Activated B cell treated with CpG ODN at 0.5 μM for 24 hours (primary cell): ENCODE measurements at regions of chr1 and their contacts with region 1.

Region 1: GRCh38 chr1:16009030-16009709 is 5.1 kb downstream of the SRARP start:
- DNase-seq: peak; percentile 67
- ATAC-seq: peak; percentile 33
- H3K4me3 Mint-ChIP-seq: no peak overlapping the region
- H3K27ac Mint-ChIP-seq: no peak overlapping the region
- H3K4me1 Mint-ChIP-seq: peaks cover 42% of the 10 kb centered on the region
- H3K27me3 Mint-ChIP-seq: no peaks in the 10 kb centered on the region
- CTCF ChIP-seq: peak; percentile 84

Region 2: DNA sequence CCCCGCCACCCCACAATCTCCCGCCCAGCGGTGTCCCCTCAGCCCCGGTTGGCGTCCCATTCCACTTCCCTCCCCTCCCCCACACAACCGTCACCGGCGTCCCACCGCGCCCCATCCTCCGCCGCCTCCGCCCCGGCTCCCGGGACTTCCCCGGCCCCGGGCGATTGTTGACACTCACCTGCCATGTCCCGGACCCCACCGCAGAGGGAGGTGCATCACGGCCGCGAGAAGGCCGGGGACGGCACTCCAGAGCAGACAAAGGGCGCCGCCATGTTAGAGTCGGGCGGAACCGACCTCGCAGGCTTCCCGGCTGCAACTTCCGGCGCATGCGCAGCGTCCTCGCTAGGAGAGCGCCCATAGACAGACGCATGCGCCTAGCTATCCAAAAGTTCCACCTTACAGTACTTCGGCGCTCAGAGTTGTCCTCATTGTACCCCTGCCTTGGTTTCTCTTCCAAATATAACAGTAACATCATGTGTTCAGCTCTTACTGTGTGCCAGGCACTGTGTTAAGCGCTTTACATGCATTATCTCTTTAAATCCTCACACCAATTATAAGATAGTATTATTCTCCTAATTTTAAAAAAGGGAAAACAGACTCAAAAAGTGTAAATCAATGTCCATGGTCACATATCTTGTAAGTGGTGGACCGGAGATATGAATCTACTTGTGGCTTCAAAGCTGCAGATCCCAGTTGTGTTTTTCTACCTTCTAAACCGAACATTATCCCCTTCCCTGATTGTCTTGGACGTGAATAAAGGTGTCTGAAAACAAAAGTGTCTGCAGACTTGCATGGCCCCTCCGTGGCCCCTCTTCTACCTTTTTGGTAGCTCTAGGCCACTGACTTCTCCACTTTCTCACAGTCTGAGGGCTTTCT is 33.1 kb before region 1 on chr1 and contains the start of gene ZBTB17:
- CTCF ChIA-PET with region 1: interaction called, 3 read pairs
- POLR2A ChIA-PET with region 1: interaction called, 19 read pairs
- intact Hi-C with region 1: no loop called
- DNase-seq: peak; percentile 95
- ATAC-seq: peak; percentile 76
- H3K4me3 Mint-ChIP-seq: peak within 1 kb of the TSS; percentile 93
- H3K27ac Mint-ChIP-seq: peak within 1 kb of the TSS; percentile 96
- H3K4me1 Mint-ChIP-seq: peaks cover 43% of the 10 kb centered on the region
- H3K27me3 Mint-ChIP-seq: no peaks in the 10 kb centered on the region
- CTCF ChIP-seq: no peak
- total RNA-seq, gene ZBTB17: 109 and 121 TPM in 2 replicates

Region 3: DNA sequence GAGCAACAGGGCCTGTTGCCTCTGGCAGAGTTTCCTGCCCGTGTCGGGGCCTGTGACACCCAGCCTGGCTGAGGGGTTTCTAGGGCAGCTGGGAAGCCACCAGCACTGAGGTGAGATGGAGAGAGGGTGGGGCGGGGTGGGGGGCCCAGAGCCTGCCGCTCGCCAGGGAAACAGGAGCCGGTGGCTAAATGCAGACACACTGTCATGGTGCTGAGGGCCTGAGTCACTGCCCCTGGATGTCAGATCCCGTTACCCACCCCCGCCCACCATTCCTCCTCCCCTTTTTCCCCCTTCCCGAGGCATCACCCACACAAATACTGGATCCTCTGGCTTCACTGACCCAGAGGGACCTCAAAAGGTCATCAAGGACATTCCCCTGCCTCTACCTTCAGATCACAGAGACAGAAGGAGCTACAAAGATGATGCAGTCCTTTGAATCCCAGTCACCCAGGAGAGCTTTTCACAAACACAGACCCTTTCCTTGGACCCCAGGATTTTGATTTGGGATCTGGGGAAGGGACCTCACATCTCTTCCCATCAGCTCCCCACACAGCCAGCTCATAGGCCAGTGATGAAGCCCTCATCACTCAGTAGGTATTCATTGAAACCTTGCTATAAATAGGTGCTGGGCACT is 10.6 kb after region 1 on chr1:
- CTCF ChIA-PET with region 1: no interaction called
- POLR2A ChIA-PET with region 1: no interaction called
- intact Hi-C with region 1: no loop called
- DNase-seq: no peak
- ATAC-seq: no peak
- H3K4me3 Mint-ChIP-seq: no peak overlapping the region
- H3K27ac Mint-ChIP-seq: no peak overlapping the region
- H3K4me1 Mint-ChIP-seq: peaks cover 6% of the 10 kb centered on the region
- H3K27me3 Mint-ChIP-seq: peaks cover 3% of the 10 kb centered on the region
- CTCF ChIP-seq: no peak

Region 4: GRCh38 chr1:16032388-16033103 is 23.4 kb after region 1 on chr1:
- CTCF ChIA-PET with region 1: no interaction called
- POLR2A ChIA-PET with region 1: no interaction called
- intact Hi-C with region 1: loop called (anchors 1 kb)
- DNase-seq: peak; percentile 50
- ATAC-seq: peak; percentile 100
- H3K4me3 Mint-ChIP-seq: no peak overlapping the region
- H3K27ac Mint-ChIP-seq: no peak overlapping the region
- H3K4me1 Mint-ChIP-seq: peaks cover 2% of the 10 kb centered on the region
- H3K27me3 Mint-ChIP-seq: peaks cover 28% of the 10 kb centered on the region
- CTCF ChIP-seq: no peak

Region 5: GRCh38 chr1:16048573-16049189 is 39.5 kb after region 1 on chr1:
- CTCF ChIA-PET with region 1: no interaction called
- POLR2A ChIA-PET with region 1: no interaction called
- intact Hi-C with region 1: no loop called
- DNase-seq: peak; percentile 41
- ATAC-seq: peak; percentile 89
- H3K4me3 Mint-ChIP-seq: peak overlapping the region; percentile 53
- H3K27ac Mint-ChIP-seq: no peak overlapping the region
- H3K4me1 Mint-ChIP-seq: peaks cover 3% of the 10 kb centered on the region
- H3K27me3 Mint-ChIP-seq: peaks cover 20% of the 10 kb centered on the region
- CTCF ChIP-seq: no peak

Region 6: DNA sequence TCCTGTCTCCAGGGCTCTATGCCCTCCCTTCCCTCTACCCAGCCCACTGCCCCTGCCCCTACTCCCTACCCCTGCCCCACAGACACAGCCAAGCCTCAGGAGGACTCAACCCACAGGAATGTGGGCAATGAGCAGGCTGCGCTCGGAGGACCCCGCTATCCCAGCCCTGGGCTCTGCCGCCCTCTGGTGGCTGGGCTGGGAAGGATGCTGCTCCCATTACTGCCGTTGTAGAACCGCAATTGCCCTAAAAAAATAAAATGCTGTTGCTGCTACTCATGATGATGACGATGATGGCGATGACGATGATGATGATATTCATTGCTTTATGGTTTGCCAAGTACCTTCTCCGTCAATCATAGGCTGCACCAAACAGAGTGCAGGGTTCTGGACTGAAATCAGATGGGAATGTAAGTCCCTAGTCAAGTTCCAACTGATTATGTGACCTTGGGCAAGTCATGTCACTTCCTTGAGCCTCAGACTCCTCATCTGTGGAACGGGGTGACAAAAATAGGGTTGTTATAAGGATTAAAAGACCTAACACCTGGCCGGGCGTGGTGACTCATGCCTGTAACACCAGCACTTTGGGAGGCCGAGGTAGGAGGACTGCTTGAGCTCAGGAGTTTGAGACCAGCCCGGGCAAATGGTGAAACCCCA is 178.7 kb after region 1 on chr1:
- CTCF ChIA-PET with region 1: no interaction called
- POLR2A ChIA-PET with region 1: no interaction called
- intact Hi-C with region 1: loop called (anchors 1 kb)
- DNase-seq: peak; percentile 69
- ATAC-seq: peak; percentile 89
- H3K4me3 Mint-ChIP-seq: no peak overlapping the region
- H3K27ac Mint-ChIP-seq: no peak overlapping the region
- H3K4me1 Mint-ChIP-seq: no peaks in the 10 kb centered on the region
- H3K27me3 Mint-ChIP-seq: peaks cover 19% of the 10 kb centered on the region
- CTCF ChIP-seq: peak; percentile 44

Region 7: DNA sequence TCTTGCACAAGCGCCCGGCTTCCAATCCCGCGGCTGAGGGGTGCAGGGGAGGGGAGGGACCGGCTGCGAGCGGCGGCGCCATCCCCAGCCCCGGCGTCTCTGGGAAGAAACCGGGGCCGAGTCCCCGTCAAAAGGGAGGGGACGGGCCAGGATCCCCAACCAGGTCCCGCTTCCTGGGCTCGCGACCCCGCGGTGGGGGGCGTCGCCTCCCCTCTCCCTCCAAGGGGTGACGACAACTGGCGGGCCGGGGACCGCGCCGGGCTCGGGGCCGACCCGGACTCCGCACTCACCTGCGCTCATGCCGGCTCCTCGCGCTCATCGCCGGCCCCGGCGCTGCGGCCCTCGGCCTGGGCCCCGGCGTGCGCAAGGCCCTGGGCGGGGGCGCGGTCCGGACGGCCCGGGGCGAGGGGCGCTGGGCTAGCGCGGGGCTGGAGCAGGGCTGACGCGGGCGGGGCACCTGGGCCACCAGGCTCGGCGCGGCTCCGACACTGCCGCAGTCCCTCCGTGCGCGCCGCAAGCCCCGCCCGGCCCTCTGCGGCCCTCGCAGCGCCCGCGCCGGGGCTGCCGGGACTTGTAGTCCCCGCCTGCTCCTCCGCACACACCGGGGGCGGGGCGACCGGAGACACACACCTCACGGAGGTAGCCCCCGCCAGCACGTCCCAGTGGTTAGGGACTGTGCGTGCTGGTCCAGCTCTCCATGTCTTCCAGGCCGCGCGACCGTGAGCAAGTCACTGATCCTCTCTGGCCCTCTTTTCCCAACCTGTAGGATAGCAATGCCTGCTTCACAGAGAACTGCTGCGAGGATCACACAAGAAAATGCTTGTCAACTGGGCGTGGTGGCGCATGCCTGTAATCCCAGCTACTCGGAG is 1002.5 kb after region 1 on chr1 and contains the start of gene ATP13A2:
- CTCF ChIA-PET with region 1: no interaction called
- POLR2A ChIA-PET with region 1: no interaction called
- intact Hi-C with region 1: no loop called
- DNase-seq: peak; percentile 87
- ATAC-seq: peak; percentile 99
- H3K4me3 Mint-ChIP-seq: peak within 1 kb of the TSS; percentile 81
- H3K27ac Mint-ChIP-seq: peak within 1 kb of the TSS; percentile 20
- H3K4me1 Mint-ChIP-seq: peaks cover 24% of the 10 kb centered on the region
- H3K27me3 Mint-ChIP-seq: no peaks in the 10 kb centered on the region
- CTCF ChIP-seq: no peak
- total RNA-seq, gene ATP13A2: 27.6 and 31.9 TPM in 2 replicates